ENCODE measurements at regions of chr1 and their contacts with region 1.

Region 1: DNA sequence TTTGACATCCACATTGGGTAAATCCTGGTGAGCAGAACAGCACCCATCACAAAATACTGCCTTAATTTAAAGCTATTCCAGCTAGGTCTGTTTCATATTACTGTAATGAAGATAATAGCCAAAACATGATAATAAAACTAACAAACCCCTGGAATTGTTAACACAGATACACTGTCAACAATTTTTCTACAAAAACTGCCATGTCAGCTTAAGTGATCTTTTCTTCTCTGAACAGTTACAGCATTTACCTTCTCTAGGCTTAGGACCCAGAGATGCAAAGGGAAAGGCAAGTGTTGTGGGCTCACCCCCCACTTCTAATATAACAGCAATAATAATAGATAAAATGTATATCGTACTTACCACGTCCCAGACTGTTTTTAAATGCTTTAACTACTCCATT is 92.1 kb downstream of the SMYD3 start:
- DNase-seq: no peak
- ATAC-seq: no peak
- H3K4me3 ChIP-seq: no peak overlapping the region
- H3K27ac ChIP-seq: no peak overlapping the region
- H3K4me1 ChIP-seq: no peaks in the 10 kb centered on the region
- H3K27me3 ChIP-seq: no peaks in the 10 kb centered on the region
- CTCF ChIP-seq: no peak
- POLR2A ChIP-seq: no peak

Region 2: DNA sequence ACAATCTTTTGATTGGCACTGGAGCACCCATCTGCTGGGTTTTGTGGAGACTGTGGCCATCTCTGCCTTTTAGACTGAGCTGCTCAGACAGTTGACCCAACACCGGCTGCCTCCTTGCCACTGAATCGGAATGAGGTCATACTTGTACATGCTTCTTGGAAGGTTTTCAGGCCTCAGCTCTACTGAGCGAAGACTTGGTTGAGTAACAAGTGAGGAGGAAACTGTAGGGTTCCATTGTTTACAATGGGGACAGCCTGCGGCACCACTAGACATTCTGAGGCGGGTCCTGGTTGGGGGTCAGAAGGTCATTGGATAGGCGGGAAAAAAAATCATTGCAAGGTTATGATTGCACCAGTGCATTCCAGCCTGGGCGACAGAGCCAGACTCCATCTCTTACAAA is 939.9 kb before region 1 on chr1:
- intact Hi-C with region 1: no loop called
- DNase-seq: no peak
- ATAC-seq: no peak
- H3K4me3 ChIP-seq: no peak overlapping the region
- H3K27ac ChIP-seq: no peak overlapping the region
- H3K4me1 ChIP-seq: no peaks in the 10 kb centered on the region
- H3K27me3 ChIP-seq: no peaks in the 10 kb centered on the region
- CTCF ChIP-seq: no peak
- POLR2A ChIP-seq: no peak

Region 3: DNA sequence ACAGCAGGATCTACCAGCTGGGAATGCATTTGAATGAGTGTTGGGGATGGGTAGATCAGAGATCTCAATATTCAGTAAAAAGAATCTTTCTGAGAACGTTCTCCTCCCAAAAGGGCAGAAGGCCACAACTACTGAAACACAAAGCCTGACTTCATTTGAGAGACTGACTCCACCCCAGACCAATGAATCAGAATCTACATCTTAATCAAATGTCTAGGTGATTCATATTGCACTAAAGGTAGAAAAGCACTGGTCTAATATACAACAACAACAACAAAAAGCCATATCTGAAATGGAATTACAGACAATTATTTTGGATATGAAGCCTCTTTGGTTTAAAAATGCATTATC is 31.8 kb before region 1 on chr1:
- intact Hi-C with region 1: loop called in 1 of 10 experiments (anchors 2 kb)
- DNase-seq: no peak
- ATAC-seq: no peak
- H3K4me3 ChIP-seq: no peak overlapping the region
- H3K27ac ChIP-seq: no peak overlapping the region
- H3K4me1 ChIP-seq: no peaks in the 10 kb centered on the region
- H3K27me3 ChIP-seq: no peaks in the 10 kb centered on the region
- CTCF ChIP-seq: no peak
- POLR2A ChIP-seq: no peak